ENCODE measurements at regions of chr3 and their contacts with region 1.

Region 1: GRCh38 chr3:150220799-150221198 is 187.3 kb upstream of the TSC22D2 start:
- DNase-seq: no peak
- H3K4me3 ChIP-seq: no peak overlapping the region; the same call in 1 of the 2 replicates
- H3K4me3 Mint-ChIP-seq: peak overlapping the region; percentile 69
- H3K27ac Mint-ChIP-seq: peak overlapping the region; percentile 8
- H3K4me1 ChIP-seq: no peaks in the 10 kb centered on the region
- H3K4me1 Mint-ChIP-seq: peaks cover 7% of the 10 kb centered on the region
- H3K27me3 ChIP-seq: no peaks in the 10 kb centered on the region
- H3K27me3 Mint-ChIP-seq: no peaks in the 10 kb centered on the region
- CTCF ChIP-seq: no peak

Region 2: GRCh38 chr3:149736175-149736952 is 484.4 kb before region 1 on chr3:
- CTCF ChIA-PET with region 1: no interaction called
- POLR2A ChIA-PET with region 1: no interaction called
- intact Hi-C with region 1: no loop called
- DNase-seq: no peak
- H3K4me3 ChIP-seq: no peak overlapping the region
- H3K4me3 Mint-ChIP-seq: no peak overlapping the region
- H3K27ac Mint-ChIP-seq: no peak overlapping the region
- H3K4me1 ChIP-seq: peaks cover 9% of the 10 kb centered on the region
- H3K4me1 Mint-ChIP-seq: no peaks in the 10 kb centered on the region
- H3K27me3 ChIP-seq: no peaks in the 10 kb centered on the region
- H3K27me3 Mint-ChIP-seq: no peaks in the 10 kb centered on the region
- CTCF ChIP-seq: no peak

Region 3: GRCh38 chr3:149936812-149937233 is 284.0 kb before region 1 on chr3:
- CTCF ChIA-PET with region 1: no interaction called
- POLR2A ChIA-PET with region 1: no interaction called
- intact Hi-C with region 1: loop called (anchors 1 kb)
- DNase-seq: peak; percentile 56 to 60
- H3K4me3 ChIP-seq: no peak overlapping the region
- H3K4me3 Mint-ChIP-seq: no peak overlapping the region
- H3K27ac Mint-ChIP-seq: no peak overlapping the region
- H3K4me1 ChIP-seq: no peaks in the 10 kb centered on the region
- H3K4me1 Mint-ChIP-seq: peaks cover 16% of the 10 kb centered on the region
- H3K27me3 ChIP-seq: no peaks in the 10 kb centered on the region
- H3K27me3 Mint-ChIP-seq: no peaks in the 10 kb centered on the region
- CTCF ChIP-seq: peak; percentile 85

Region 4: GRCh38 chr3:149969940-149970715 is 250.7 kb before region 1 on chr3:
- CTCF ChIA-PET with region 1: no interaction called
- POLR2A ChIA-PET with region 1: no interaction called
- intact Hi-C with region 1: loop called (anchors 1 kb)
- DNase-seq: peak; percentile 77 to 84
- H3K4me3 ChIP-seq: peak overlapping the region; percentile 91
- H3K4me3 Mint-ChIP-seq: peak overlapping the region; percentile 78
- H3K27ac Mint-ChIP-seq: peak overlapping the region; percentile 84
- H3K4me1 ChIP-seq: no peaks in the 10 kb centered on the region
- H3K4me1 Mint-ChIP-seq: no peaks in the 10 kb centered on the region
- H3K27me3 ChIP-seq: no peaks in the 10 kb centered on the region
- H3K27me3 Mint-ChIP-seq: peaks cover 3% of the 10 kb centered on the region
- CTCF ChIP-seq: no peak

Region 5: DNA sequence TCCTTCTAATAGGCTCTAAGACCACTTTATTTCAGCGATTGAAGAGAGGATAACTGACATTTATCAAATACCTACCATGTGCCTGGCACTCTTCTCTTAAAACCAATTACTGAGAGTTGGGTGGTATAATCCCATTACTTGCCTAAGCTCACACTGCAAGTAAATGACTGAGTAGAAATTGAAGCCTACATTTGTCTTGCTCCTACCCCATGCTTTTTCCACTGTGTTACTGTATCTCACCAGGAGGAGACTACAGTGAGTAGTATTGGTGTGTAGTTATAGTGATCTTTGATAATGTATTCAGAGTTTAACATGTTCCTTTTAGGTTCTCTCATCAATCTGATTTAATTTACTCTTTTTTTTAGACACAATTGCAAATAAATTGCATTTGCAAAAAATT is 346.5 kb after region 1 on chr3:
- CTCF ChIA-PET with region 1: no interaction called
- POLR2A ChIA-PET with region 1: no interaction called
- intact Hi-C with region 1: no loop called
- DNase-seq: no peak
- H3K4me3 ChIP-seq: no peak overlapping the region
- H3K4me3 Mint-ChIP-seq: no peak overlapping the region
- H3K27ac Mint-ChIP-seq: no peak overlapping the region
- H3K4me1 ChIP-seq: no peaks in the 10 kb centered on the region
- H3K4me1 Mint-ChIP-seq: no peaks in the 10 kb centered on the region
- H3K27me3 ChIP-seq: no peaks in the 10 kb centered on the region
- H3K27me3 Mint-ChIP-seq: no peaks in the 10 kb centered on the region
- CTCF ChIP-seq: no peak